Activated CD4-positive, alpha-beta T cell treated with anti-CD3 and anti-CD28 coated beads for 36 hours (primary cell): ENCODE measurements at regions of chr5 and their contacts with region 1.

Region 1: DNA sequence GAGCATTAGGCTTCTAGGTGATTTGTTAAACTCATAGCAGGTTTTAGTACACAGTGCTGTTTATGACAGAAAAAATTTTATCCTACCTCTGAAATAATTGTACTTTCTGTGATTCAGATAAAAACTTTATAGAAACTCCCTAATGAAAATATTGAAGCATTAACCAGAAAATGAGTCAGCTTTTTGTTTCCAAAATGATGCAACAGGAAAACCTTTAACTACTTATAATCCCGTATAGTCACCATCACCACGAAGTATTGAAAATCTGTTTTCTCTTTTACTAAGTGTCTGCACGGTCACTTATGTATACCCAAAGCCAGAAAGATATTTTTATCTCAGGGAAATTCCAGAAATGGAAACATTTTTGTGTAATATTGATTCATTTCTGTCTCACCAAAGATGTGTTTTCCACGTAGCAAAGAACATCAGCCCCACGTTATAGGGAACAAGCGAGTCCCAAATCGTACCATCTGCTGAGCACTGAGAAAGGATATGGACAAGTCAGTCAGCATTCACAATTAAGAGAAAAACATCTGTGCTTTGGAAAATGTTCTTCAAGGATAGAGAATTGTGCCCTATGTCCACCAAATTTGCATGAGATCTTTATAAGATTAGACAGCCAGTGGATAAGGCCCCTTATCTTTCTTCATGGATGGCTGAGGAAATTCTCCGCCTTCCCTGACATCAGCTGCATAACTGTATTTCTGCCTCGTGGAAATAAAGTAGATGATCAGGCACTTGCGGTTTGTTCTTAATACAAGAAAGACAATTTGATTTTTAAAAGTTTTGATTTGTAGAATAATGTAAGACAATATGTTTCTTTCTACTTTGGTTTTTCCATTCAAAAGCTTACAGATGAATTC is 41.9 kb downstream of the TNFAIP8 start:
- DNase-seq: peak; percentile 43
- ATAC-seq: peak; percentile 70
- H3K4me3 Mint-ChIP-seq: peak overlapping the region; percentile 56
- H3K27ac Mint-ChIP-seq: peak overlapping the region; percentile 88
- H3K4me1 Mint-ChIP-seq: peaks cover 88% of the 10 kb centered on the region
- H3K27me3 Mint-ChIP-seq: no peaks in the 10 kb centered on the region

Region 2: DNA sequence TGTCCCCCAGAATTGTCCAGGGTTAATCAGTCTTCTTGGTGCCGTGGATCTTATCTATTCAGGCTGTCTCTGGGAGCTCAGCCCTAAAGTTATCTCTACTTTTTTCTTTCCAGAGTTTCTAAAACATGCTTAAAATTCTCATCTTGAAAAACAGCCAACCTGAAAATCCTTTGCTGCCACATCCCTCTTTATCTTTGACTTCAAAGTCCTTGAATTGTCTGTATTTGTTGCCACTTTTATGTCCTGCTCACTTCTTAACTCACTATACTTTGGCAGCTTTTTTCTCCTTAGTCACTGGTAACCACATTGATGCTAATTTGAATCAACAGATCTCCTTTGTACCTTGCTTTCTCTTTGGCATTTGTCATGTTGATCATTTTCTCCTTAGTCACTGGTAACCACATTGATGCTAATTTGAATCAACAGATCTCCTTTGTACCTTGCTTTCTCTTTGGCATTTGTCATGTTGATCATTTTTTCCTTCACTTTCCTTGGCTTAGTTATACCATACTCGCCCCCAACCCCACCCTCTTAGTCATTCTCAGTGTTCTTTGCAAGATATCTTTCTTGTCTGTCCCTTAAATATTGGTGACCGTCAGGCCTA is 318.3 kb before region 1 on chr5:
- CTCF ChIA-PET with region 1: no interaction called
- POLR2A ChIA-PET with region 1: no interaction called
- intact Hi-C with region 1: loop called (anchors 1 to 2 kb)
- DNase-seq: peak; percentile 70
- ATAC-seq: peak; percentile 92
- H3K4me3 Mint-ChIP-seq: peak overlapping the region; percentile 33
- H3K27ac Mint-ChIP-seq: peak overlapping the region; percentile 59
- H3K4me1 Mint-ChIP-seq: peaks cover 50% of the 10 kb centered on the region
- H3K27me3 Mint-ChIP-seq: no peaks in the 10 kb centered on the region

Region 3: GRCh38 chr5:119309326-119309725 is 88.4 kb before region 1 on chr5:
- CTCF ChIA-PET with region 1: interaction called, 4 read pairs
- POLR2A ChIA-PET with region 1: no interaction called
- intact Hi-C with region 1: loop called in 1 of 2 experiments (anchors 1 kb)
- DNase-seq: no peak
- ATAC-seq: no peak
- H3K4me3 Mint-ChIP-seq: peak overlapping the region; percentile 53
- H3K27ac Mint-ChIP-seq: peak overlapping the region; percentile 91
- H3K4me1 Mint-ChIP-seq: peaks cover 91% of the 10 kb centered on the region
- H3K27me3 Mint-ChIP-seq: no peaks in the 10 kb centered on the region

Region 4: GRCh38 chr5:119347991-119348390 is 49.8 kb before region 1 on chr5:
- CTCF ChIA-PET with region 1: interaction called, 3 read pairs
- POLR2A ChIA-PET with region 1: interaction called, 3 read pairs
- intact Hi-C with region 1: loop called (anchors 1 kb)
- DNase-seq: no peak
- ATAC-seq: no peak
- H3K4me3 Mint-ChIP-seq: no peak overlapping the region
- H3K27ac Mint-ChIP-seq: peak overlapping the region; percentile 86
- H3K4me1 Mint-ChIP-seq: peaks cover 92% of the 10 kb centered on the region
- H3K27me3 Mint-ChIP-seq: no peaks in the 10 kb centered on the region

Region 5: DNA sequence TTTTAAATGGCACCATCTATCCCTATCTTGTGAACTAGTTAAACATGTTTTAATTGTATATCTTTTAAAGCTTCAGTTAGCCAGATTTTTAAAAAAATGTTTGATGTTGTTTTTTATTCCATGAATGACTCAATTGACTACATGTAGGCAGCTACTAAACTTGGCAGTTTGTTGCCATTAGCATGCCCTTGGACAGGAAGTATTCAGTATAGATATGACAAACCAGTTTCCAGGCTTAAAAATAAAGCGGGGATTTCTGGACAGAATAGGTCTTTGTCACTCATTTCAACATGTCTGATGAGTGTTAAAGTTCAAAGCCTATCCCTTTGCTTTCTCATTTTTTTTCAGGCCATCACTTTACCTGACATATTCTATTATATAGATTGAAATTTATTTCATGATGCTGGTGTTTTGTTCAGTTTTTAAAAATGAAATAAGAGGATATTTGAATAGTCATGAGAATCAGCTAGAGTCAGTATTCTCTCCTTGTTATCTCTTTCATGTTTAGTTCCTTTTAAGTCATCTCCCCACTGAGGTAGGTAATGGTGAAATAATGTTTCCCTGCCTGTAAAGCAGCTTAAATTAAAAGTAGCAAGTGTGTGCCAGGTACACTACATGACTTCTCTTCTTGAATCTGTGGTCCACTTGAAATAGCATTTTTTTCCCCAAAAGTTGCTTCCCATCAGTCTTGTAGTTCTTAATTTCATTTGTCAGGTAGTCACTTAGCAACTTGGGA is 30.1 kb before region 1 on chr5:
- CTCF ChIA-PET with region 1: interaction called, 6 read pairs
- POLR2A ChIA-PET with region 1: interaction called, 3 read pairs
- intact Hi-C with region 1: loop called (anchors 1 kb)
- DNase-seq: peak; percentile 25
- ATAC-seq: peak; percentile 69
- H3K4me3 Mint-ChIP-seq: peak overlapping the region; percentile 57
- H3K27ac Mint-ChIP-seq: peak overlapping the region; percentile 95
- H3K4me1 Mint-ChIP-seq: peaks cover 89% of the 10 kb centered on the region
- H3K27me3 Mint-ChIP-seq: no peaks in the 10 kb centered on the region